OCI-LY7 (cell line): ENCODE measurements at regions of chr3 and their contacts with region 1.

Region 1: GRCh38 chr3:11379233-11379823 is 107.1 kb downstream of the ATG7 start:
- DNase-seq: peak; percentile 53
- H3K4me3 ChIP-seq: no peak overlapping the region
- H3K27ac ChIP-seq: no peak overlapping the region
- H3K4me1 ChIP-seq: peaks cover 7% of the 10 kb centered on the region
- CTCF ChIP-seq: peak; percentile 88

Region 2: GRCh38 chr3:11236595-11237461 is 142.5 kb before region 1 on chr3:
- CTCF ChIA-PET with region 1: no interaction called
- POLR2A ChIA-PET with region 1: no interaction called
- intact Hi-C with region 1: no loop called
- DNase-seq: peak; percentile 70
- H3K4me3 ChIP-seq: no peak overlapping the region
- H3K27ac ChIP-seq: no peak overlapping the region
- H3K4me1 ChIP-seq: no peaks in the 10 kb centered on the region
- CTCF ChIP-seq: peak; percentile 86

Region 3: DNA sequence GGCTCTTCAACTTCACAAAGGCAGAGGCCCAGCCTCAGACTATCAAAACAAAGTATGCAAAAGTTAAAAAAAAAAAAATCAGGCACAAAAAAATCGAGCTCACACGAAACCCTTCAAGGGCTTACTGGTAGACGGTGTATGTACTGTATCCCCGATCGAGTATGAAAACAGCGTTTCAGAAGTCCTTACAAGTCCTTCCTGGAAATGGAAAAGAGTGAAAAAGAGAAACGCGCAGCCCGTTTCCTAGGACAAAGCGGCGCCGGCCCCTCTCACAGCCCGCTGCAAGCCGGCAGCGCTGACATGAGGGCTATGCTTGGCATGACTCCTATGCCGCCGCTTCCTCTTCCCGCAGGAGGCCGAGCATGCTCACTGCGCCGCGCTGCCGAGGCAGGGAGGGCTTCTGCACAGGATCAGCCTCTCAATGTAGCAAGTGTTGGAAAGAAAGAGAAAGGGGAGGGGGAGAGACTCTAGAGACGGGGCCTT is 264.3 kb after region 1 on chr3 and contains the start of gene VGLL4:
- CTCF ChIA-PET with region 1: no interaction called
- POLR2A ChIA-PET with region 1: interaction called, 4 read pairs
- intact Hi-C with region 1: loop called (anchors 2 kb)
- DNase-seq: peak; percentile 87
- H3K4me3 ChIP-seq: peak within 1 kb of the TSS; percentile 86
- H3K27ac ChIP-seq: peak within 1 kb of the TSS; percentile 83
- H3K4me1 ChIP-seq: peaks cover 27% of the 10 kb centered on the region
- CTCF ChIP-seq: peak; percentile 33; the same call in 1 of the 2 replicates
- total RNA-seq, gene VGLL4: 27.9 and 36.1 TPM in 2 replicates

Region 4: GRCh38 chr3:11651900-11652299 is 272.6 kb after region 1 on chr3:
- CTCF ChIA-PET with region 1: no interaction called
- POLR2A ChIA-PET with region 1: interaction called, 3 read pairs
- intact Hi-C with region 1: loop called (anchors 2 kb)
- DNase-seq: peak; percentile 56
- H3K4me3 ChIP-seq: no peak overlapping the region
- H3K27ac ChIP-seq: no peak overlapping the region
- H3K4me1 ChIP-seq: peaks cover 16% of the 10 kb centered on the region
- CTCF ChIP-seq: peak; percentile 83

Region 5: GRCh38 chr3:11803977-11804892 is 424.9 kb after region 1 on chr3:
- CTCF ChIA-PET with region 1: no interaction called
- POLR2A ChIA-PET with region 1: no interaction called
- intact Hi-C with region 1: loop called (anchors 2 kb)
- DNase-seq: peak; percentile 69
- H3K4me3 ChIP-seq: no peak overlapping the region
- H3K27ac ChIP-seq: no peak overlapping the region
- H3K4me1 ChIP-seq: no peaks in the 10 kb centered on the region
- CTCF ChIP-seq: peak; percentile 86

Region 6: GRCh38 chr3:11835028-11835639 is 455.8 kb after region 1 on chr3:
- CTCF ChIA-PET with region 1: no interaction called
- POLR2A ChIA-PET with region 1: interaction called, 3 read pairs
- intact Hi-C with region 1: loop called (anchors 5 kb)
- DNase-seq: peak; percentile 24
- H3K4me3 ChIP-seq: no peak overlapping the region
- H3K27ac ChIP-seq: no peak overlapping the region
- H3K4me1 ChIP-seq: no peaks in the 10 kb centered on the region
- CTCF ChIP-seq: peak; percentile 83

Region 7: DNA sequence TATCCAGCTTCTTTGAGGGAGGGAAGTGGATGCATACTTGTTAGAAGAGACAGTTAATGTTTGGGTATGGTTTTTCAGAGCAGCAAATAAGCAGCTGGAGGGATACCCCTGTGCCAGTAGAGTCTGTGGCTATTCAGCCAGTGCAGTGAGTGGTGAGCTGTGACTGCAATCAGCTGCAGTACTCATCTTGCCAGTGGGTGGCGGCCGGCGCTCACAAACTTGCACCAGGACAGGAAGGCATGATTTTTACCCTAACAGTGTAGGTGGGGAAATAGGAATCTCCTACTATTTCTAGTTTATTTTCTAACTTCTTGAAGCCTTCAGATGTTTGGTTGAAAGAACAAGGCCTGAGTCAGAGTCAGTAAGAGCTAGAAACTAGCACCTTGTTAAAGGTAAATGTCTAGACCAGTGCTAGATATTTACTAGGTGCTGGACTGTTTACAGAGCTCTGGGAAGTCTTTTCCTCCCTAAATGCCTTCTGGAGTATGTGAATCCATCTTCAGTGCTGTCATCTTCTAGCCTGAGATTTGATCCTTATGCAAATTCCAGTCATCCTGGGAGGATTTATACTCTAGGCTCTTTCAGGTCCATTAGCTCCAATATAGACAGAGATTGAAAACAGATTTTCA is 755.8 kb after region 1 on chr3:
- CTCF ChIA-PET with region 1: no interaction called
- POLR2A ChIA-PET with region 1: no interaction called
- intact Hi-C with region 1: loop called (anchors 5 kb)
- DNase-seq: peak; percentile 53
- H3K4me3 ChIP-seq: no peak overlapping the region
- H3K27ac ChIP-seq: no peak overlapping the region
- H3K4me1 ChIP-seq: no peaks in the 10 kb centered on the region
- CTCF ChIP-seq: peak; percentile 91